ENCODE measurements at regions of chr1 and their contacts with region 1.

Region 1: DNA sequence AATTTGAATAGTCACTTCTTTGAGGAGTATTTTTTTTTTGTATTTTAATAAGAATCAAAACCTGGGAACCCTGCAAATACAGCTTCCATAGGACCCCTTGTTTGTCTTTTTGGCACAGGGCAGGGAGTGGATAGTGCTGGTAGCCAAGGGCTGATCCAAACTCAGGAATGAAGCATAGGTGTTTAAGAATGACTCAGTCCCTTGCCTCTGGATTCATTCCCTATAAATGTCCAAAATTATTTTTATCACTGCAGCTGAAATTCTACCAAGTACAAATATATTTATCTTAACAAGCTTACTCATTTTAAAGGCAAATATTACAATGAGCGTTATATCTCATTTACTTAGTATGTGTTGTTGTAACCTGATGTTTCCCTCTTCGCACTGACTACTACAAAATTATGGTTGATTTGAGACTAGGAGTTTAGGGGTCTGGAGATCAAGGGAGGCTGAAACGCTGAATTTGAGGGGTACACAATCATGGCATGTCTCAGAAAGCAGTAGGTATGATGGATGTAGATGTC is 278.6 kb upstream of the LYPLAL1 start:
- DNase-seq: no peak
- H3K4me3 ChIP-seq: no peak overlapping the region
- H3K27ac ChIP-seq: no peak overlapping the region
- H3K4me1 ChIP-seq: no peaks in the 10 kb centered on the region
- H3K27me3 ChIP-seq: no peaks in the 10 kb centered on the region
- CTCF ChIP-seq: no peak
- POLR2A ChIP-seq: no peak

Region 2: DNA sequence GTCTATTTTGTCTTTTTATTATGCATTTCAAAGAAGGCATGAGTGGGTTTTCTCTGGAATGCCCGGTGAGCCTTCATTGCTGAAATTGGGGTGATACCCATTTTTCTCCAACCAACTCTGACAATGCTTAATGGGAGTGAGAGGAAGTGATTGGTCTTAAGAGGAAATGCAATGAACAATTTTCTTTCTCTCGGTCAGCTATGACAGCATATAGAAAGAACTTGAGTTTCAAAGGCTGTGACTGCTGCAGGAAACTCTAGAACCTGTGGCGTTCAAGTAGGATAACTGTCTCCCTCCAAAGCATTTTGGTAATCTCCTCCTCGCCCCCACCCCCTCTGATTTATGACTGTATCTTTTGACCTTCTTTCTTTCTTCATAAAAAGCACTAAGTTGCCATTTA is 434.5 kb after region 1 on chr1:
- intact Hi-C with region 1: no loop called
- DNase-seq: no peak
- H3K4me3 ChIP-seq: no peak overlapping the region
- H3K27ac ChIP-seq: no peak overlapping the region
- H3K4me1 ChIP-seq: no peaks in the 10 kb centered on the region
- H3K27me3 ChIP-seq: no peaks in the 10 kb centered on the region
- CTCF ChIP-seq: no peak
- POLR2A ChIP-seq: no peak

Region 3: GRCh38 chr1:219897914-219898313 is 1002.8 kb after region 1 on chr1:
- intact Hi-C with region 1: loop called (anchors 5 kb)
- DNase-seq: no peak
- H3K4me3 ChIP-seq: no peak overlapping the region
- H3K27ac ChIP-seq: no peak overlapping the region
- H3K4me1 ChIP-seq: no peaks in the 10 kb centered on the region
- H3K27me3 ChIP-seq: no peaks in the 10 kb centered on the region
- CTCF ChIP-seq: no peak
- POLR2A ChIP-seq: no peak